ENCODE measurements at regions of chr6 and their contacts with region 1.

Region 1: GRCh38 chr6:166456395-166457156 is 73.8 kb upstream of the MPC1 start:
- DNase-seq: no peak
- ATAC-seq: peak; percentile 29 to 51
- H3K4me3 ChIP-seq: no peak overlapping the region
- H3K27ac ChIP-seq: peak overlapping the region in 3 of 4 donors; percentile 14 to 31 (median 18)
- H3K4me1 ChIP-seq: no peaks in the 10 kb centered on the region
- H3K27me3 ChIP-seq: no peaks in the 10 kb centered on the region
- CTCF ChIP-seq: peak in 2 of 5 experiments; percentile 13 to 45
- POLR2A ChIP-seq: no peak

Region 2: GRCh38 chr6:166707045-166707444 is 250.5 kb after region 1 on chr6:
- in situ Hi-C with region 1: no loop called
- intact Hi-C with region 1: loop called (anchors 10 kb)
- DNase-seq: peak in 1 of 2 donors; percentile 43
- ATAC-seq: peak; percentile 40 to 81
- H3K4me3 ChIP-seq: no peak overlapping the region
- H3K27ac ChIP-seq: no peak overlapping the region
- H3K4me1 ChIP-seq: peaks cover 0 to 3% of the 10 kb centered on the region in 2 donors
- H3K27me3 ChIP-seq: no peaks in the 10 kb centered on the region
- CTCF ChIP-seq: peak; percentile 29 to 62 (median 43)
- POLR2A ChIP-seq: no peak